Naive thymus-derived CD8-positive, alpha-beta T cell (primary cell): ENCODE measurements at regions of chr6 and their contacts with region 1.

Region 1: GRCh38 chr6:14210663-14211561 is 93.3 kb downstream of the CD83 start:
- DNase-seq: peak; percentile 72 to 91 (median 86)
- ATAC-seq: peak; percentile 87
- H3K4me3 Mint-ChIP-seq: peak overlapping the region; percentile 77 to 90 (median 86)
- H3K27ac Mint-ChIP-seq: peak overlapping the region; percentile 67 to 90 (median 75)
- H3K4me1 Mint-ChIP-seq: peaks cover 4 to 23% (median 11%) of the 10 kb centered on the region in 4 donors
- H3K27me3 Mint-ChIP-seq: no peaks in the 10 kb centered on the region

Region 2: GRCh38 chr6:14238374-14238773 is 27.5 kb after region 1 on chr6:
- POLR2A ChIA-PET with region 1: interaction called, 13 read pairs
- DNase-seq: no peak
- ATAC-seq: no peak
- H3K4me3 Mint-ChIP-seq: no peak overlapping the region
- H3K27ac Mint-ChIP-seq: no peak overlapping the region
- H3K4me1 Mint-ChIP-seq: peaks cover 5 to 19% (median 10%) of the 10 kb centered on the region in 4 donors
- H3K27me3 Mint-ChIP-seq: peaks cover 0 to 4% (median 0%) of the 10 kb centered on the region in 5 donors

Region 3: DNA sequence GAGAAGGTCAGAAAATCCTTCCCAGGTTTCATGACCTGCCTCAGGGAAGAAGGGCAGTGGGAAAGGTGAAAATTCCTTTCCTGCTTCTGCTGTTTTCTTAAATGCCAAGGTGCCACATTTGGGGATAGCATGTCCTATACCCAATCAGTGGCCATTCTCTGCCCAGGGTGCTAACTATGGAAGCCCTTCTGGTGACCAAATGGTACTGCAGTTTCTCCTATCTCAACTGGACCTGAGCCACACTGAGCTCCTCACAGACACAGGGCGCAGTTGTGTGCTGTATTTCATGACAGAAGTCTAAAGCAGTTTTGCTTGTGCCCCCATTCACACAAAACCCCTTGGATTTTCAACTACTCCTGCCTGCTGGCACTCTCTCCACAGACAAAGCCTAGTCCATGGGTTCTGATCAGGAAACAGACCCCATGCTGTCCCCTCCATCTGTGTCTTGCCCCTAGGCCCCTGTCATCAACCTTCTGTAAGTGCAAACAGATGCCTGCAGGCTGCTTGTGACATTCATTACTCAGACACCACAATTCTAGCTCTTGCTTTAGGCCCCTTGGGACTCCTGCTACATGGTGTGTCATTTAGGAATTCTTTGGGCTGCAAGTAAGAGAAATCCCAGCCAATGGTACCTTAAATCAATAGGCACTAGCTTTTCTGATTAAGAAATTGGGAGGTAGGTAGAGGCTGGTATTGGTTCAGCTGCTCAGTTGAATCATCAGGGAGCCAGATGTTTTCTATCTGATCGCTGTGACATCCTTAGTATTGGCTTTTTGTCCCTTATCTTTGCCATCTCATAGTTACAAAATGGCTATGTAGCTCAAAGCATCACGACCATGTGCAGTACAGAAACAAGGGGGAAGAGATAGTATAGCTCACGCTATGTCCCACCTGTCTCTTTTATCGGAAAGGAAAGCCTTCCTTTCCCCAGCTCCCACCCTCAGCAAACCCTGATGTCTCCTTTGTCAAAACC is 54.4 kb after region 1 on chr6:
- POLR2A ChIA-PET with region 1: no interaction called
- DNase-seq: no peak
- ATAC-seq: no peak
- H3K4me3 Mint-ChIP-seq: no peak overlapping the region
- H3K27ac Mint-ChIP-seq: no peak overlapping the region
- H3K4me1 Mint-ChIP-seq: peaks cover 6 to 29% (median 15%) of the 10 kb centered on the region in 4 donors
- H3K27me3 Mint-ChIP-seq: no peaks in the 10 kb centered on the region